HEK293T (cell line): ENCODE measurements at regions of chr6 and their contacts with region 1.

Region 1: DNA sequence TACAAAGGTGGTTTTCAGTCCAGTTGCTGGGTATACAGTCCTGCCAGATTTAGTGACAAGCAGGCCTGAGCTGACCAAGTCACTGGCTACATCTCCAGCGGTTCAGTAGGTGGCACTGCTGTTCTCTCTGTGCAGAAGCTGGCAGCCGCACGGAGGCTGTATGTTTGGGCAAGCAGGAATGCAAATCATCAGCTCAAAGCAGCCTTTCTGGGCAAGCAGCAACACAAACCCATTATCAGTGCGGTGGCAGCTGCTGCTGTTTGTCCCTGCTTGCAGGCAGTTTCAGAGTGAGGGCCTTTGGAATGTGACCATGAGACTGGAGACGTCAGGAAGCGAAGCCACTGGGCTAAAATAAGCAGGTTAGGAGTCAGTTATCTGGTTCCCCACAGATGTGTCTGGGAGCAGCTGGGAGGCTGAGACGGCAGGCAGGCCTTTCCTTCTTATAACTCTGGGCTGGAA is 72.5 kb downstream of the TXLNB start:
- DNase-seq: peak; percentile 84

Region 2: DNA sequence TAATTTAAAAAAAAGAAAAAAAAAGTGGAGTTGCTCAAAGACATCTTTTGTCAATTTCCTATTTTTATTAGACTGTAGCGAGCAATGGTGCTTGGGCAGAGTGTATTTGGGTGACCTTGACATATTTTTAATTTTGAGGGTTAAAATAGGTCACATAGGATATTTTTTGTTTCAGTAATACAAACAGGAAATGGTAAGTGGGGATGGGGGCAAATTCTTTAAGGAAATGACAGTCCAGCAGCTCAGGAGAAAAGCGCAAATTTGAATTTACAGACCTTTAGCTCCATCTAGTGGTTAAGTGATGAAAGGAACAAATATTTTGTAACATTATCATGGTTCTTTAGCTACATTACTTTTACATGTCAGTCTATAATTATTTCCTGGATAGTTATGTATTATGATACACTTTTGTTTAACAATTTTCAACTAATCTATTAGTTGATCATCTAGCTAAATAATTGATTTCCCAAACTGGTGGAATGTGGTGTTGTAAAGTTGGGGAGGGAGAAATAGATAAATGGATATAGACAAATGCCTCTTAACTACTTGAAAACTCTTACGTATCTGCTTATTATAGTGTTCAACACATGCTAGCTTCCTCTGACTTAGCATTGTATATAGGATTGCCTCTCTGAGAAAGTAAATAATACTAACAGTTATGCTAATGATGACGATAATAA is 145.1 kb after region 1 on chr6:
- CTCF ChIA-PET with region 1: interaction called, 44 read pairs
- POLR2A ChIA-PET with region 1: interaction called, 5 read pairs
- DNase-seq: peak; percentile 60